Activated naive CD4-positive, alpha-beta T cell treated with anti-CD3 and anti-CD28 coated beads for 36 hours (primary cell): ENCODE measurements at regions of chr17 and their contacts with region 1.

Region 1: GRCh38 chr17:7296189-7296902 is 1.9 kb upstream of the YBX2 start:
- DNase-seq: peak; percentile 72
- H3K4me3 Mint-ChIP-seq: peak overlapping the region; percentile 32
- H3K27ac Mint-ChIP-seq: no peak overlapping the region
- H3K4me1 Mint-ChIP-seq: peaks cover 19% of the 10 kb centered on the region
- H3K27me3 Mint-ChIP-seq: peaks cover 24% of the 10 kb centered on the region

Region 2: DNA sequence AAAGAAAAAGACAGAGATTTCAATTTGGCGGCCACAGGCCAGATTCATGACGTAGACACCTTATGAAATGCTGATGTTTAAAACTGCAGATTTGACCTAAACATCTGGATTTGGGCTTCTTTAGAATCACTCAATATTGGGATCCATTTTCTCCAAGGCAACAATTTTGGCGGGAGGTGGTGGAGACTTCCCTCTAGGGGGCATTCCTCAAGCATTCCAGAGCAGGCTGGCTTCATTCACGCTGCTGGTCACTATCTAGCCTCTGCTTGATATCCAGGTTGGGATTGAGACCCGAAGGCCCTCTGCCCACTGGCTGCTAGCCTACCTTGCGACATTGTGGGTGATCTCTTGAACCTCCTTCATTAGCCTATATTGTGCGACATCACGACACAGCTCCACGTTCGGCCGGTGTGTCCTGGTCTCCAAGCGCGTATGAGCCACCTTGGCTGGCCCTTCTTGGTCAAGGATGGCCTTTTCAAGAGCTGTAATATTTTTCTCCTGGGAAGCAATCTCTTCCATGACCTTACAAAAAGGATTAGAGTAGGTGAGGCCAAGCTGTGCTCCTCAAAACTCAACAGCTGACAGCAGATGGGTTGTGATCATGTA is 495.8 kb before region 1 on chr17:
- CTCF ChIA-PET with region 1: no interaction called
- intact Hi-C with region 1: no loop called
- DNase-seq: no peak
- H3K4me3 Mint-ChIP-seq: no peak overlapping the region
- H3K27ac Mint-ChIP-seq: no peak overlapping the region
- H3K4me1 Mint-ChIP-seq: no peaks in the 10 kb centered on the region
- H3K27me3 Mint-ChIP-seq: peaks cover 3% of the 10 kb centered on the region

Region 3: GRCh38 chr17:7280519-7281429 is 15.6 kb before region 1 on chr17:
- CTCF ChIA-PET with region 1: interaction called, 45 read pairs
- intact Hi-C with region 1: loop called (anchors 1 kb)
- DNase-seq: peak; percentile 91
- H3K4me3 Mint-ChIP-seq: peak overlapping the region; percentile 74
- H3K27ac Mint-ChIP-seq: no peak overlapping the region
- H3K4me1 Mint-ChIP-seq: peaks cover 20% of the 10 kb centered on the region
- H3K27me3 Mint-ChIP-seq: peaks cover 17% of the 10 kb centered on the region